OCI-LY7 (cell line): ENCODE measurements at regions of chr12 and their contacts with region 1.

Region 1: DNA sequence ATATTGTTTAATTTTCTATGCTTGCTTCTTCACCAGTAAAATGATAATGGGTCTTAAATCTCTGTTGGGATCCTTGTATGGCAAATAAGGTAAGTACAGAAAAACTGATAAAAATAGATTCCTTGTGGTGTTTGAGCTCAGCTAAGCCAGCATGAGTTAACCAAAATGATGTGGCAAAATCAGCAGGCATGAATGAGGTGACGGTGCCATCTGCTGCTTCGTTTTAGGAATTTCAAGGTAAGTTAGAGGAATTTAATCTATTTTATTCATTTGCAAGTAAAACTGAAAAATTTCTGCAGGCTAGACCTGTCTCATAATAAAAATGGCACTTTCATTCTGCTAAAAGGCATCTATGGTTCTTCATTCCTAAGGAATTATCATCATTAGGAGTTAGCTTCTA is 10.0 kb upstream of the CLEC7A start:
- DNase-seq: peak; percentile 67
- H3K4me3 ChIP-seq: no peak overlapping the region
- H3K27ac ChIP-seq: no peak overlapping the region
- H3K4me1 ChIP-seq: no peaks in the 10 kb centered on the region
- CTCF ChIP-seq: peak; percentile 85

Region 2: DNA sequence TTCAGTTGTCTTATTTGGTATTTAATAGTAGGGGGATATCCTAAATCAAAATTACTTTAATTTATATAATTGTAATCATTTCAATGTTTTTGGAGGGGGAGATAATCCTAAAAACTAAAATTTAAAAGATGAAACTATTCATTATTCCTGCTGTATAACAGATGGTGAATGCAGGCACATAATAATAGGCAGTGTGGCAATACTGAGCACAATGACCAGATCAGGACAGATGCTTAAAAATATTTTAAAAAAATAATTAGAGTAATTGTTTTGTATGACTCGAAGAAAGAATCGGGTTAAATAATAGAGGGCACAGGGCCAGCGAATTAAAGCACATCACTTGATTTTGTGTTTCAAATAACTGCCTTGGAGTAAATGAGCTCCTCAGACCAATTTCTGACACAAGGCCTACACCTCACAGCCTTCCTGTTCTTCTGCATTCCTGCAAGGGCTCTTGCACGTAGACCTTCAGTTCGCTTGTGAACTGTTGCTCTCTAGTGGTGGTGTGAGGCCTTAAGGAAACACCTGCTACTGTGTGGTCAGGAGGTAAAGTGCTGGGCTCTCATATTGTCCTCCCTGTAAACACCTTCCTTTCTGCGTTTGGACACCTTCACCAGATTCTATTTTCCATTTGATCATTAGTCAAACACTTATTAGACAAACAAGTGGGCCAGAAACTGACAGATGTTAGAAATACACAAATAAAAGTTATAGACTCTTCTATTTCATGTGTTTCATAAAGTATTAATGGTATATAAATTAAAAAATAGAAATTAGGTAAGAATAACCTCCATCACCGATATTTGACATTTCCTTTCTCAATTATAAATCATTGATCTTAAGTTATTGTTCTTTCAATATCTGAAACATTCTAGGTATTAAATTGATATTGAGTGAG is 342.0 kb before region 1 on chr12:
- CTCF ChIA-PET with region 1: no interaction called
- POLR2A ChIA-PET with region 1: no interaction called
- intact Hi-C with region 1: loop called (anchors 1 kb)
- DNase-seq: peak; percentile 90
- H3K4me3 ChIP-seq: no peak overlapping the region
- H3K27ac ChIP-seq: no peak overlapping the region
- H3K4me1 ChIP-seq: peaks cover 26% of the 10 kb centered on the region
- CTCF ChIP-seq: peak; percentile 91

Region 3: GRCh38 chr12:9925708-9926393 is 214.2 kb before region 1 on chr12:
- CTCF ChIA-PET with region 1: no interaction called
- POLR2A ChIA-PET with region 1: no interaction called
- intact Hi-C with region 1: loop called (anchors 10 kb)
- DNase-seq: peak; percentile 56
- H3K4me3 ChIP-seq: no peak overlapping the region
- H3K27ac ChIP-seq: no peak overlapping the region
- H3K4me1 ChIP-seq: peaks cover 11% of the 10 kb centered on the region
- CTCF ChIP-seq: peak; percentile 87

Region 4: DNA sequence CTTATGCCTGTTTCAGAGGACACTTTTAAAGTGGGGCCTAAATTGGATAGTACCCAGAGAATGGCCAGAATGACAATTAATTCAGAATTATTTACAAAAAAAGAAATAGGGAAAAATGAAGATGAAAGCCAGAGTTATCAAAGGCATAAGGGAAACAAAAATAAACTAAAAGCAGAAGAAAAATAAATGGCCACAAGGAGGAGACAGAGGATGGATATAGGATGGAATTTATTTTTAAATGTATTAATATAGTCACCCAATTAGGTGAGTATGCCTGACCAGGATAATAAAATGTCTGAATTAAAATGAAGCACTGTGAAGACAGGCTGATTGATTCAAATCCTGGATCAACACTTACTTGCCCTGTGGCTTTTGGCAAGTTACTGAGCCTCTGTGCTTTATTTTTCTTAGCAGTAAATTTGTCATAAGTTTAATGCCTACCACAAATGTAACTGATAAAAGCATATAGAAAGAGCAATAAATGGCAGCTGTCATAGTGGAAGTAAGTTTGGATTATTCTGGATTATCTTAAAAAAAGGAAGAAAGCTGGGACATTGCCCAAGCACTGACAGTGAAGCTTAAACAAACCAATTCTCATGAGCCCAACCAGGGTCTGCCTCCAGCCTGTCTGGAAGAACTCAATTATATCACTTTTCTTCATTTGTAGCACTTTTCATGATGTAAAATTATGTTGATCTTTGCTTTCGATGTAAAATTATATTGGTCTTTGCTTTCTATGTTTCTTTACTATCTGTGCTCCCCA is 106.0 kb before region 1 on chr12:
- CTCF ChIA-PET with region 1: no interaction called
- POLR2A ChIA-PET with region 1: interaction called, 3 read pairs
- intact Hi-C with region 1: loop called (anchors 1 kb)
- DNase-seq: peak; percentile 9
- H3K4me3 ChIP-seq: no peak overlapping the region
- H3K27ac ChIP-seq: no peak overlapping the region
- H3K4me1 ChIP-seq: no peaks in the 10 kb centered on the region
- CTCF ChIP-seq: peak; percentile 81